ENCODE measurements at regions of chr10 and their contacts with region 1.

Region 1: DNA sequence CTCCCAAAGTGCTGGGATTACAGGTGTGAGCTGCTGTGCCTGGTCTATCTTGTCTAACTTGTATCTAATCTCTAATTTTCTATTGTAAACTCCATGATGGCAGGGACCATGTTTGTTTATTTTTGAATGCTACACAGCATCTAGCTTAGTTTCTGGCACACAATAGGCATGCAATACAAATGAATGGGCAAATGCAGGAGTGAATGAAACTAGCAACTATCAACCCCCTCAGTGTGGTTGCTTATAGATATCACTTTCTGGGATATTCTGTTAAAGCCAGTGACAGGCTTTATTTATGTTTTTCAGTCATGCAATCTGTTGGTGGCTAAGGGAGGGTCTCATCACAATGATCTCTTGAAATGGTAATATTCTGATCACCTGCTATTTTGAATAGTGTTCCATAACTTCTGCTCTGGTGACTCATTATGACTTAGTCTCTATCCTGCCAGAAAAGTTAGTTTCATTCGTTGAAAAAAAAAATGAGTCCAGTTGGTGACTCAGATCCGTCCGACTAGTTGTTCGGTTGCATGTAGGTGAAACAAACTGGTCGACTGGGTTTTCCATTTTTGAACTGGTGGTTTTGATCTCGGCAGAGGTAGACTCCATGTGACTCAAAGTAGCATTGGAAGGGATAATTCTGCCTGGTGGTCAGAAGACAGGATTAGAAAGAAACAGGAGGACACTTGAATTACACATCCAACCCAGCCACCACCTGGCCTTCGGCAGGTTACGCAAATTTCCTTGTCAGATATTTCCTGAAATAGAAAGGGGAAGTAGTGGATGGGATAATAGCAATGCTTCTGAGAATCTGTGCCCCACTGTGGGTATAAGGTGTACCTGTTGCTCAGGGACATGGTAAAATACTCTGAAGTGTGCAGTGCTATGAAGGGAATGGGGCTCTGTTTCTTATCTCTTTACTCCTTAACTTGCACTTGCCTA is 76.8 kb downstream of the GATA3 start:
- DNase-seq: peak; percentile 55
- H3K4me3 Mint-ChIP-seq: peak overlapping the region; percentile 47
- H3K27ac Mint-ChIP-seq: peak overlapping the region; percentile 80
- H3K4me1 Mint-ChIP-seq: peaks cover 62% of the 10 kb centered on the region
- H3K27me3 Mint-ChIP-seq: no peaks in the 10 kb centered on the region

Region 2: GRCh38 chr10:8065651-8066050 is 65.6 kb before region 1 on chr10:
- intact Hi-C with region 1: loop called (anchors 1 kb)
- DNase-seq: no peak
- H3K4me3 Mint-ChIP-seq: peak overlapping the region; percentile 92
- H3K27ac Mint-ChIP-seq: peak overlapping the region; percentile 94
- H3K4me1 Mint-ChIP-seq: peaks cover 87% of the 10 kb centered on the region
- H3K27me3 Mint-ChIP-seq: no peaks in the 10 kb centered on the region

Region 3: DNA sequence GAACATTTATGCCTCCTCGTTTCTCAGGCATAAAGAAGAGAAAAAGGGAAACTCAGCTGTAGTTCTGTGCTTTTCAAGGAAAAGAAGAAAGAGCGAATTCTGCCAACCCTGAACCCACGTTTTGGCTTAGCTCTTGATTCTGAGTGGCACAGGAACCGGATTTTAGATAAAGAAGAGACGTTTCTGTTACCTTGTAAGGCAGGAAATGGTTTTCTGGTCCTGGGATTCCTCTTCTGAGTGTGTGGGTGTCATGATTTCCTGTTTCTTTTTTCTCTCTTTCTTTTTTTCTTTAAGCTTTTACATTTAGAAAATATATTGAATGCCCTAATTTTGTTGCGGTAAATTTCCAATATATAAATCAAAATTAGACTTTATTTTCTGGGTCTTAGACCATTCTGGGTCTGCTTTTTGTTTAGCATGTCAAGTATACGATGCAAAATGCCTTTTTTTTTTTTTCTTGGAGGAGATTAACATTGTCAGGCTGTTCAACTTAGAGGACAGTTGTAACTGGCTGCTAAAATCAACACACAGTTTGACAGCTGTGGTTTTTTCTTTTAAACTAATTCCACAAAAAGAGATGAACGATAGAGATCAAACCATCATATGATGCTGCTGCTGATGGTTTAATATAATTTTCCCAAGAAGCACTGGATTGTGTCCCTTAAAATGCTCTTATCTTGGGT is 114.0 kb after region 1 on chr10:
- intact Hi-C with region 1: loop called (anchors 1 kb)
- DNase-seq: no peak
- H3K4me3 Mint-ChIP-seq: peak overlapping the region; percentile 58
- H3K27ac Mint-ChIP-seq: peak overlapping the region; percentile 93
- H3K4me1 Mint-ChIP-seq: peaks cover 76% of the 10 kb centered on the region
- H3K27me3 Mint-ChIP-seq: no peaks in the 10 kb centered on the region

Region 4: GRCh38 chr10:8360365-8360764 is 229.1 kb after region 1 on chr10:
- intact Hi-C with region 1: loop called (anchors 1 kb)
- DNase-seq: peak; percentile 37
- H3K4me3 Mint-ChIP-seq: peak overlapping the region; percentile 70
- H3K27ac Mint-ChIP-seq: peak overlapping the region; percentile 88
- H3K4me1 Mint-ChIP-seq: peaks cover 79% of the 10 kb centered on the region
- H3K27me3 Mint-ChIP-seq: no peaks in the 10 kb centered on the region

Region 5: DNA sequence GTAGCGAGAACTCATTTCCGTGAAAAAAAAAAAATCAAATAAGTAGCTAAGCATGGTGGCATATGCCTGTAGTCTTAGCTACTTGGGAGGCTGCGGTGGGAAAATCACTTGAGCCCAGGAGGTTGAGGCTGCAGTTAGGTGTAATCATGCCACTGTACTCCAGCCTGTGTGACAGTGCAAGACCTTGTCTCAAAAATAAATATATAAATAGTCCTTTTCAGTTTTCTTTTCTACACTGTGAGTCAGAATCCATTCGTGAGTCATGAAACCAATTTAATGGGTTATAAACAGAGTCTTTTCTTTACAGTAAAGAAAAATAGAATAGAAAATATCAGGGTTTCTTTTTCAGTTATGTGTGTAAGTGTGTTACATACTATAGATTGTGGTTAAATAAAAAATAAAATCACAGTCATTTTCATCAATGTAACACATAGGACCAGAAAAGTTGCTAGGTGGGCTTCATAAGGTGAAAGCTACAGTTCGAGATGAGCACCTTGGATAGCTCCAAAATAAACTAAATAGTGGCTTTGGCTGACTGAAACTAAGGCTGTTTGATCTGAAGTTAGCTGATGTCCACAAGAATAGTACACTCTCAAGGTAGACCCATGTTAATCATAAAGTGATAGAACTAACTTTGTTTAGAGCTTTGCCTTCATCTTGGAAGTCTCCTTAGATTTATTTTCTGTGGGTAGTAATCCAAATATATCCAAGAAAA is 704.4 kb after region 1 on chr10:
- intact Hi-C with region 1: loop called (anchors 2 kb)
- DNase-seq: no peak
- H3K4me3 Mint-ChIP-seq: no peak overlapping the region
- H3K27ac Mint-ChIP-seq: no peak overlapping the region
- H3K4me1 Mint-ChIP-seq: peaks cover 36% of the 10 kb centered on the region
- H3K27me3 Mint-ChIP-seq: no peaks in the 10 kb centered on the region

Region 6: DNA sequence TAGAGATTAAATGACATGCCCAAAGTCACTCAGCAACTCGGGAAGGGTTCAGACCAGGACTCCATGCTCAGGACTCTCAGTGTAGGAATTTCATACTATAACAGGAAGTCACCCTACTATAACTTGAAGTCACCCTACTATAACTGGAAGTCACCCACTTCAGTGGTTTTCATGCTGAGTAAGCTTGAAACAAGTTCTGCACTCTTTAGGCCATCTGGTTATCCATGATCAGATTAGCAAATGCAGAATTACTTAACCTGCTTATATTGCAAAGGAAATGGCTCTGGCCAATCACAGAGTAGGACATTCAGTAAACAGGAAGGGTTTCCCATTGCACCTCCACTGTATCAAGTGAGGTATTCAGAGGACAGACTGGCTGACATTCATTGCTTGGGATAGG is 1163.6 kb after region 1 on chr10:
- intact Hi-C with region 1: loop called (anchors 2 kb)
- DNase-seq: no peak
- H3K4me3 Mint-ChIP-seq: no peak overlapping the region
- H3K27ac Mint-ChIP-seq: peak overlapping the region; percentile 71
- H3K4me1 Mint-ChIP-seq: peaks cover 27% of the 10 kb centered on the region
- H3K27me3 Mint-ChIP-seq: peaks cover 2% of the 10 kb centered on the region